ENCODE measurements at regions of chr14 and their contacts with region 1.

Region 1: DNA sequence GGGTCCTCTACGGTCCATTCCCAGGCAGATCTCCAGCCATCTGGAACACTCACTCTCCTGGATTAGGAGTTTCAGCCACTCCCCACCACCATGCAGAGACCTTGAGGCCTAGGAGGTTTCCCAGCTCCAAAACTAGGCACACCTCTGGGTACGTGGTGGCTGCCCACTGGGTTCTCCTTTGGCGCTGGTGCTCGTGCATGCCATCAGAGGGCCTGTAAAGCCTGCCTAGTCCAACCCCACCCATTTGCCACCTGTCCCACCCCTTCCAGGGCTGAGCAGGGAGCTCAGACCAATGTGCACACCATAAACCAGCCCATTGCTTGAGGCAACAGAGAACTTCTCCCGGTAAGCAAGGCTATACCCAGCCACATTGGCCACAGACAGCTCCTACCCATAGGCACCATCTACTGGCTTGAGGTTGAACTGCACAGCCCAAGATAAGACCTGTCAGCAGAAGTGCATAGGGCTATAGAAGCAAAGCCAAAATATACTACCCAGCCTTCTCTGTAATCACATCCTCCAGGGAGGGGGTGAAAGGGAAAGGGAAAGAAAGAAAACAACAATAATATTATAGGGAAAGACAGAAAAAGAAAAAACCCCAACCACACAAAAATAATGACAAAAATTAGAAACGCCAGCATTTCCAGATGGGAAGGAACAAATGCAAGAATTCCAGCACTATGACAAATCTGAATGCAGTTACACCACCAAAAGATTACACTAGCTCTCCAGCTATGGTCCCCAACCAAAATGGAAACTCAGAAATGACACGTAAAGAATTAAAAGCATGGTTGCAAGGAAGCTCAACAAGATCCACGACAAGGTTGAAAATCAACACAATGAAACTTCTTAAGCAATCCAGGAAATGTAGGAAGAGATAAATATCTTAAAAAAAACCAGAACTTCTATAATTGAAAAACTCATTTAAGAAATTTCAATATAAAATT is 111.9 kb upstream of the CCDC175 start:
- DNase-seq: peak; percentile 19 to 76
- H3K4me3 ChIP-seq: no peak overlapping the region
- H3K27ac ChIP-seq: no peak overlapping the region
- H3K4me1 ChIP-seq: no peaks in the 10 kb centered on the region
- H3K27me3 ChIP-seq: no peaks in the 10 kb centered on the region
- CTCF ChIP-seq: peak; percentile 61 to 85 (median 78)
- EP300 ChIP-seq: no peak
- POLR2A ChIP-seq: no peak
- RAD21 ChIP-seq: peak; percentile 75 to 79

Region 2: GRCh38 chr14:59422069-59422881 is 266.2 kb before region 1 on chr14:
- CTCF ChIA-PET with region 1: no interaction called
- POLR2A ChIA-PET with region 1: no interaction called
- DNase-seq: no peak
- H3K4me3 ChIP-seq: no peak overlapping the region
- H3K27ac ChIP-seq: no peak overlapping the region
- H3K4me1 ChIP-seq: no peaks in the 10 kb centered on the region
- H3K27me3 ChIP-seq: no peaks in the 10 kb centered on the region
- CTCF ChIP-seq: peak in 2 of 3 experiments; percentile 25 to 36; a peak in 2 of 4 replicates
- EP300 ChIP-seq: no peak
- POLR2A ChIP-seq: no peak
- RAD21 ChIP-seq: peak; percentile 69

Region 3: GRCh38 chr14:59698793-59699192 is 10.3 kb after region 1 on chr14:
- CTCF ChIA-PET with region 1: interaction called, 14 read pairs
- POLR2A ChIA-PET with region 1: no interaction called
- DNase-seq: no peak
- H3K4me3 ChIP-seq: no peak overlapping the region
- H3K27ac ChIP-seq: no peak overlapping the region
- H3K4me1 ChIP-seq: no peaks in the 10 kb centered on the region
- H3K27me3 ChIP-seq: no peaks in the 10 kb centered on the region
- CTCF ChIP-seq: no peak
- EP300 ChIP-seq: no peak
- POLR2A ChIP-seq: no peak
- RAD21 ChIP-seq: no peak

Region 4: GRCh38 chr14:59787045-59787674 is 98.7 kb after region 1 on chr14:
- CTCF ChIA-PET with region 1: no interaction called
- POLR2A ChIA-PET with region 1: no interaction called
- DNase-seq: no peak
- H3K4me3 ChIP-seq: no peak overlapping the region
- H3K27ac ChIP-seq: no peak overlapping the region
- H3K4me1 ChIP-seq: no peaks in the 10 kb centered on the region
- H3K27me3 ChIP-seq: peaks cover 0 to 1% (median 0%) of the 10 kb centered on the region in 4 experiments; a peak in 1 of 7 replicates
- CTCF ChIP-seq: no peak
- EP300 ChIP-seq: no peak
- POLR2A ChIP-seq: no peak
- RAD21 ChIP-seq: no peak; a peak in 1 of 4 replicates

Measured in H1 (cell line).